K562 (cell line): ENCODE measurements at regions of chr6 and their contacts with region 1.

Region 1: DNA sequence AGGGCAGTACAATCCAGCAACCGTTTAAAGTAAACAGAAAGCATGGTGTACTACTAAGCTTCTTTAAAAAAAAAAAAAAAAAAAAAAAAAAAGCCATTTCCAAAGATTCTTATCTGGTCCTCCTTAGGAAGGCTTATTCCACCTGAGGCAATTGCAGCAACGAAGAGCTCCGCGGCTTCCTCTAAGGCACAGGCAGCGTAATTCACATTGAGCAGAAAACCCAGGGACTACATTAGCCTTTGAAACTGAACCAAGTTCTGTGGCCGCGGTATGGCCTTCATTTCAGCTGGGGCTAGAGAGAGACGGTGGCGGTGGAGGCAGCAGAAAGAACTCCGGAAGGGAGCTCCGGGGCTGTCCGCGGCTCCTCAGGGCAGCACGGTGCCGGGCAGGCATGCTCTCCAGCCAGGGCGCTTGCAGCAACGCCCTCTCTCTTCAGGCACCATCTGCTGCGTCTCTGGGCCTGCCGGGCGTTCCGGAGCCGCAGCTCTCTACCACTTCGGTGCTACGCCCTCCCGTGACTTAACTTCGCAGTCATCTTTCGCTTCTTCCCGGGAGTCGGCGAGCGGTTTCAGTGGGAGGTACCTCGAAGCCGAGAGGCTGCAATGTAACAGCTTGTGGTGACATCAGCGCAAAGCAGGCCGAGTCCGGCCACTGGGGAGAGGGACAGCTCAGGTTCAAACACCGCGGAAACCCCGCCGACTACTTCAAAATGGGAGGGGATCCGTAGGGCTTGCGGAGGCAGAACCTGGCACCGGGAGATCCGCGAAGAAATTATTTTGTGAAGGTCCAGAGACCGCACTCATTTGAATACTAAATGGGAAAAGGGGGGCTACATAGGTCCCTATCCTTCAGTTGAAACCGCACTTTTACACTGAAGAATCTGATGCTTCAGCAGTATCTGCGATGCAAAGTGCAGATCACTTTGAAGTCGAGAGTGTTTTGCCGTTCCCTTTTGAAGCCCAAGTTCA is 100.0 kb downstream of the DST start:
- DNase-seq: peak; percentile 67 to 96 (median 77)
- ATAC-seq: peak; percentile 95
- H3K4me3 ChIP-seq: peak overlapping the region; percentile 52
- H3K27ac ChIP-seq: peak overlapping the region; percentile 96
- H3K4me1 ChIP-seq: peaks cover 6 to 25% of the 10 kb centered on the region in 2 experiments; a peak in 4 of 5 replicates
- H3K27me3 ChIP-seq: no peaks in the 10 kb centered on the region
- CTCF ChIP-seq: peak; percentile 31 to 56 (median 45); a peak in 4 of 6 replicates
- EP300 ChIP-seq: no peak
- POLR2A ChIP-seq: peak; percentile 89
- RAD21 ChIP-seq: peak in 1 of 2 experiments; percentile 55; a peak in 2 of 4 replicates

Region 2: DNA sequence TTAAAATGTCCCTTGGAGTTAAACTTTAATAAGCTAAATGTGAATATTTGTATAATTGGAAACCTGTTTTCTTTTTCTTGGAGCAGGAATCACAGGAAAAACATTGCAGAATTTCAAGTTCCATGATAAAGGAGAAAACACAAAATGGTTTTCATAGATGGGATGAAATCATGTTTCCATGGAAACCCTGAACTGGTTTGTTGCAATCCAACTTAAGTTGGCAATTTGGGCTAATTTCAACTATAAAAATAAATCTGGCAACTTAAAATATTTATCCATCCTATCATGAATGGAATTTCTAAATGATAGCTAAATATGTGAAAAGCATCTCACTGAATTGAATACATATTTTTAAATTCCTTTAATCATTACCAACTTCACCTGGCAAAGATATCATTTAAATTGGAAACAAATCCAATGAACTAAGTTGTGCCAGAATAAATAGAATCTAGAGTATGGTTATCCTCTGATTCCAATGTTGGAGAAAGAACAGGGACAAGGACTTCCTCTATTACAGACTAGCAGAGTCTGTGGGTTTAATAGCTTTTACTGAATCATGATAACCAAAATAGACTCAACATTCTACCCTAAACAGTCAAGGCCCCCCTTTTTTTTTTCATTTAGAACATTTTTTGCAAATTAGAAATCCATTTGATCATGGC is 328.5 kb before region 1 on chr6:
- CTCF ChIA-PET with region 1: no interaction called
- POLR2A ChIA-PET with region 1: no interaction called
- in situ Hi-C with region 1: no loop called
- intact Hi-C with region 1: no loop called
- DNase-seq: no peak
- ATAC-seq: no peak
- H3K4me3 ChIP-seq: no peak overlapping the region
- H3K27ac ChIP-seq: no peak overlapping the region
- H3K4me1 ChIP-seq: no peaks in the 10 kb centered on the region
- H3K27me3 ChIP-seq: no peaks in the 10 kb centered on the region
- CTCF ChIP-seq: no peak
- EP300 ChIP-seq: no peak
- POLR2A ChIP-seq: no peak
- RAD21 ChIP-seq: no peak

Region 3: GRCh38 chr6:56491606-56492328 is 50.9 kb before region 1 on chr6:
- CTCF ChIA-PET with region 1: no interaction called
- POLR2A ChIA-PET with region 1: interaction called, 7 read pairs
- in situ Hi-C with region 1: no loop called
- intact Hi-C with region 1: loop called (anchors 5 kb)
- DNase-seq: peak in 1 of 4 experiments; percentile 12
- ATAC-seq: peak; percentile 78
- H3K4me3 ChIP-seq: no peak overlapping the region
- H3K27ac ChIP-seq: no peak overlapping the region
- H3K4me1 ChIP-seq: peaks cover 0 to 4% of the 10 kb centered on the region in 2 experiments; a peak in 2 of 5 replicates
- H3K27me3 ChIP-seq: no peaks in the 10 kb centered on the region
- CTCF ChIP-seq: no peak
- EP300 ChIP-seq: peak; percentile 69; the same call in 1 of the 2 replicates
- POLR2A ChIP-seq: no peak
- RAD21 ChIP-seq: no peak; a peak in 1 of 4 replicates